Dendritic cell treated with granulocyte-macrophage colony-stimulating factor and Interleukin-4, amounts not matched to agents 40 ng/mL and 50 ng/mL, for 4 days (primary cell): ENCODE measurements at regions of chr2 and their contacts with region 1.

Region 1: GRCh38 chr2:44981136-44982108 is 27.8 kb downstream of the SIX2 start:
- H3K4me3 Mint-ChIP-seq: no peak overlapping the region
- H3K27ac Mint-ChIP-seq: no peak overlapping the region
- H3K4me1 Mint-ChIP-seq: peaks cover 6% of the 10 kb centered on the region
- H3K27me3 Mint-ChIP-seq: peaks cover 25% of the 10 kb centered on the region

Region 2: GRCh38 chr2:45494269-45494977 is 513.0 kb after region 1 on chr2:
- intact Hi-C with region 1: loop called (anchors 1 kb)
- H3K4me3 Mint-ChIP-seq: no peak overlapping the region
- H3K27ac Mint-ChIP-seq: no peak overlapping the region
- H3K4me1 Mint-ChIP-seq: peaks cover 8% of the 10 kb centered on the region
- H3K27me3 Mint-ChIP-seq: no peaks in the 10 kb centered on the region

Region 3: GRCh38 chr2:45578056-45578809 is 596.8 kb after region 1 on chr2:
- intact Hi-C with region 1: loop called (anchors 1 kb)
- H3K4me3 Mint-ChIP-seq: no peak overlapping the region
- H3K27ac Mint-ChIP-seq: no peak overlapping the region
- H3K4me1 Mint-ChIP-seq: peaks cover 36% of the 10 kb centered on the region
- H3K27me3 Mint-ChIP-seq: no peaks in the 10 kb centered on the region